Activated CD4-positive, alpha-beta memory T cell treated with anti-CD3 and anti-CD28 coated beads for 36 hours (primary cell): ENCODE measurements at regions of chr10 and their contacts with region 1.

Region 1: DNA sequence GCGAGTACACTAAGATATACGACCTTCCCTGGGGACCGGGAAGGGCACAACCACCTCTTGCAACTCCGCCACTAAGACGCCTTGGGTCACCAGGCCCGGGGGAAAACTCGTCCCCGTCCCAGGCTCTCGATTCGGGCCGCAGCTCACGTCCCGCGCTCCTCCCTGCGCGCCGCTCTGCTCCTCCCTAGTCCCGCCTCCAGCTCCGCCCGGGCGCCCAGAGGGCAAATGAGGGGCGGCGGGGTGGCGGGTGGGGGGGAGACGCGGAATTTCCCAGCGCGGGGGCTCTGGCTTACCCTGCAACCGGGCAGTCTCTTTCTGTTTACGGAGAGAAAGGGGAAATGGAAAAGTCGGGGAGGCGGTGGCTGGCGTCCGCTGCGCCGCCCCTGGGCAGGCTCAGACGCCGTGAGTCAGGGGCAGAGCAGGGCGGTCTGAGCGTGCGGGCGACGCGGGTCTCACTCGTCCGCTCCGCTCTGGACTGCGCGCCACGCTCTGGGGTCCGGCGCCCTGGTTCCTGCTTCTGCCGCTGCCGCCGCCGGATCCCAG is at the start of gene MAP3K8:
- DNase-seq: peak; percentile 93
- H3K4me3 Mint-ChIP-seq: peak within 1 kb of the TSS; percentile 92
- H3K27ac Mint-ChIP-seq: peak within 1 kb of the TSS; percentile 95
- H3K4me1 Mint-ChIP-seq: peaks cover 49% of the 10 kb centered on the region
- H3K27me3 Mint-ChIP-seq: no peaks in the 10 kb centered on the region
- total RNA-seq, gene MAP3K8: 36.5 to 40.6 TPM

Region 2: DNA sequence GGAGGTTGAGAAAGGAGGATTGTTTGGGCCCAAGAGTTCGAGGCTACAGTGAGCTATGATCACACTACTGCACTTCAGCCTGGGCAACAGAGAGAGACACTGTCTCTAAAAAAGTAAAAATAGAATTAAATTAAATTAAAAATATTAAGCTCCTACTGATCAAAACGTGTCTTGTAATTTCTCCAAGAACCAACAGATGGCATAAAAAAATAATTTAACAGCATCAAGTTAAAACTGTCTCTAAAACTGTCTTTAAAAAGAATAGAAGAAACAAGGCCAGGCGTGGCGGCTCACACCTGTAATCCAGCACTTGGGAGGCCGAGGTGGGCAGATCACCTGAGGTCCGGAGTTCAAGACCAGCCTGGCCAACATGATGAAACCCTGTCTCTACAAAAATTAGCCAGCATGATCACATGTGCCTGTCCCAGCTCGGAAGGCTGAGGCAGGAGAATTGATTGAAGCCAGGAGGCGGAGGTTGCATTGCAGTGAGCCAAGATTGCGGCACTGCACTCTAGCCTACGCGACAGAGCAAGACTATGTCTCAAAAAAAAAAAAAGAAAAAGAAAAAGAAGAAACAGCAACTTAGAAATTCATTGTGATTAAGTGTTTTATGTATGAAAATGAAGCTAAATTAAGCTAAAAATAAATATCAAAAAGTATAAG is 109.2 kb before region 1 on chr10:
- CTCF ChIA-PET with region 1: no interaction called
- POLR2A ChIA-PET with region 1: no interaction called
- intact Hi-C with region 1: no loop called
- DNase-seq: no peak
- H3K4me3 Mint-ChIP-seq: no peak overlapping the region
- H3K27ac Mint-ChIP-seq: no peak overlapping the region
- H3K4me1 Mint-ChIP-seq: no peaks in the 10 kb centered on the region
- H3K27me3 Mint-ChIP-seq: no peaks in the 10 kb centered on the region

Region 3: DNA sequence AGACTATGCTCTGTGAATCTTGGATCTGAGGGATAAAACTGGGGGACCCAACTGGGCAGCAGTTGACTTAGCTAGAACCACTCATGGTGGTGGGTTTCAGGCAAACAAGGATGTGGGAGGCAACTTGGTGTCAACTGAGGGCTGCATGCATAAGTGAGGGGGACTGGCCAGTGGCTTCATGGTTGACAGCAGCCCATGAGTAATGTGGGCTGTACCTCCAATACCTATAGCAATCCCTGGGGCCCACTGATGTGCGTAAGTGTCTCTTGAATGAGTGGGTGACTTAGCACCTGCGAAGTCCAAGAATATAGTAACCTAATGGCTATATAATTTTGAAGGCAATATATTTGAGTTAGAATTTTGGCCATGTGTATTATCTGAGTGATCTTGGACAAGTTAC is 13.5 kb before region 1 on chr10:
- CTCF ChIA-PET with region 1: interaction called, 18 read pairs
- POLR2A ChIA-PET with region 1: interaction called, 18 read pairs
- intact Hi-C with region 1: loop called (anchors 1 kb)
- DNase-seq: no peak
- H3K4me3 Mint-ChIP-seq: no peak overlapping the region
- H3K27ac Mint-ChIP-seq: no peak overlapping the region
- H3K4me1 Mint-ChIP-seq: peaks cover 32% of the 10 kb centered on the region
- H3K27me3 Mint-ChIP-seq: no peaks in the 10 kb centered on the region

Region 4: GRCh38 chr10:30476511-30477155 is 42.8 kb after region 1 on chr10:
- CTCF ChIA-PET with region 1: no interaction called
- POLR2A ChIA-PET with region 1: no interaction called
- intact Hi-C with region 1: no loop called
- DNase-seq: no peak
- H3K4me3 Mint-ChIP-seq: no peak overlapping the region
- H3K27ac Mint-ChIP-seq: no peak overlapping the region
- H3K4me1 Mint-ChIP-seq: no peaks in the 10 kb centered on the region
- H3K27me3 Mint-ChIP-seq: no peaks in the 10 kb centered on the region

Region 5: GRCh38 chr10:30510169-30510930 is 76.5 kb after region 1 on chr10:
- CTCF ChIA-PET with region 1: interaction called, 3 read pairs
- POLR2A ChIA-PET with region 1: interaction called, 6 read pairs
- intact Hi-C with region 1: loop called (anchors 1 kb)
- DNase-seq: peak; percentile 74
- H3K4me3 Mint-ChIP-seq: no peak overlapping the region
- H3K27ac Mint-ChIP-seq: peak overlapping the region; percentile 72
- H3K4me1 Mint-ChIP-seq: peaks cover 14% of the 10 kb centered on the region
- H3K27me3 Mint-ChIP-seq: no peaks in the 10 kb centered on the region

Region 6: DNA sequence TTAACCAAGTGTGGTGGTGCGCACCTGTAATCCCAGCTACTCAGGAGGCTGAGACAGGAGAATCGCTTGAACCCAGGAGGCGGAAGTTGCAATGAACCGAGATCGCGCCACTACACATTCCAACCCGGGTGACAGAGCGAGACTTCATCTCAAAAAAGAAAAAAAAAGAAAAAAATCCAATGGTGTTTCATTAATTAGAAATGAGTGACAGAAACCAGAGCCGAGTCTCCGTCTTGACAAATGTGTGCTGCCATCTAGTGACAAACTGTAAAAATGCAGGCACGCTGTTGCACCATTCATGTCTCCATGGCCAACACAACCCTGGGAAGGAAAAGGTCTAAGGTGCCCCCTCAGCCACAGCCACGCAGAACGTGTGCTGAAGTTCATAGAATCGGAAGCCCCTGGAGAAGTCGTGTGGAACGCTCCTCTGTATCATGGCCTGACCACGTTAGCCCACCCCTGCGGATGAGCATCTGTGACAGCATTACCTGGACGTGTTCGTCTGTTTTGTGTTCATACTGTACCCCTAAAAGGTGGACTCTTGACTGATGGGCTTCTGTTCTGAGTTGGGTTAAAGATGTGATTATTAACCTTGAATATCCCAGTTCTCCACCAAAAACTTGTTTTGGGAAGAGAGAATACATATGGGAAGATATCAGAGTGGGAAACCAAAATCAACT is 100.8 kb after region 1 on chr10:
- CTCF ChIA-PET with region 1: interaction called, 15 read pairs
- POLR2A ChIA-PET with region 1: interaction called, 20 read pairs
- intact Hi-C with region 1: loop called (anchors 1 kb)
- DNase-seq: peak; percentile 78
- H3K4me3 Mint-ChIP-seq: no peak overlapping the region
- H3K27ac Mint-ChIP-seq: no peak overlapping the region
- H3K4me1 Mint-ChIP-seq: peaks cover 20% of the 10 kb centered on the region
- H3K27me3 Mint-ChIP-seq: no peaks in the 10 kb centered on the region